Naive thymus-derived CD4-positive, alpha-beta T cell (primary cell): ENCODE measurements at regions of chr3 and their contacts with region 1.

Region 1: DNA sequence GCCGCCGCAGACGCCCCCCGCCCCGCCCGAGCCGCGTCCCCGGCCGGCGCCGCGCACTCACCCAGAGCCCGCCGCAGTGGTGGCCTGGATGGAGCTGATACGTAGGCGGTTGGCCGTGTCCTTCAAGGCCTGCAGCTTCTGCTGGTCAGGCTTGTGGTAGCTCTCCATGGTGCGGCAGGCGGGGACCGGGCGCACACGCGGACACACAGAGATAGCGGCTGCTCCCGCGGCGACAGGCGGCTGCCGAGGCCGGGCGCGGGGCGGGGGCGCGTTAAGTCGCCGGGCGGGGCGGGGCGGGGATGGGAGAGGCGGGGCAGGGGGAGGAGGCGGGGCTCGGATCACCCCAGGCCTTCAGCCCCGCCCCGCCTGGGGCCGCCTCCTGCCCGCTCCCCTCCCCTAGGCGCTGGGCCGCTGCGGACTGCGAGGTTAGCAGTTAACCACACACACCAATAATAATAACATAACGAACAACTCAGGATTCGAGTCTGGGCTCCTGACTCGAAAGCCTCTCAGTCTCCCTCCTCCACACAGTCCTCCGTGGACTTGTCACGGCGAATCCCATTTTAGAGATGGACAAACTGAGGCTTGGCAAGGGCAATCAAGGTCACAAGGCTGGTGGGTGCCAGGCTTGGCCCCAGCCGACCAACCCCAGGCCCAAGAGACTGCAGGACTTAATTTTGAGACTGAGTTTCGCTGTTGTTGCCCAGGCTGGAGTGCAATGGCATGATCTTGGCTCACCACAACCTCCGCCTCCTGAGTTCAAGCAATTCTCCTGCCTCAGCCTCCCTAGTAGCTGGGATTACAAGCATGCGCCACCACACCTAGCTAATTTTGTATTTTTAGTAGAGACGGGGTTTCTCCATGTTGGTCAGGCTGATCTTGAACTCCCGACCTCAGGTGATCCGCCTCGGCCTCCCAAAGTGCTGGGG is at the start of gene TKT:
- DNase-seq: peak; percentile 58 to 85 (median 67)
- ATAC-seq: peak; percentile 92
- H3K4me3 ChIP-seq: peak within 1 kb of the TSS; percentile 70
- H3K4me3 Mint-ChIP-seq: peak within 1 kb of the TSS; percentile 90 to 97 (median 92)
- H3K27ac ChIP-seq: peak within 1 kb of the TSS; percentile 76
- H3K27ac Mint-ChIP-seq: peak within 1 kb of the TSS; percentile 69 to 89 (median 84)
- H3K4me1 ChIP-seq: peaks cover 14% of the 10 kb centered on the region in 2 donors
- H3K4me1 Mint-ChIP-seq: peaks cover 19 to 39% (median 34%) of the 10 kb centered on the region in 7 donors
- H3K27me3 ChIP-seq: no peaks in the 10 kb centered on the region
- H3K27me3 Mint-ChIP-seq: peaks cover 0 to 4% (median 0%) of the 10 kb centered on the region in 5 donors
- total RNA-seq, gene TKT: 83.5 to 333 (median 121) TPM

Region 2: GRCh38 chr3:53160660-53161449 is 95.2 kb before region 1 on chr3 and contains the start of gene PRKCD:
- CTCF ChIA-PET with region 1: no interaction called
- POLR2A ChIA-PET with region 1: no interaction called
- intact Hi-C with region 1: loop called (anchors 1 to 2 kb)
- DNase-seq: peak; percentile 55 to 81 (median 71)
- ATAC-seq: peak; percentile 82
- H3K4me3 ChIP-seq: peak within 1 kb of the TSS; percentile 68
- H3K4me3 Mint-ChIP-seq: peak within 1 kb of the TSS; percentile 80 to 95 (median 92)
- H3K27ac ChIP-seq: peak within 1 kb of the TSS; percentile 77
- H3K27ac Mint-ChIP-seq: peak within 1 kb of the TSS; percentile 75 to 94 (median 90)
- H3K4me1 ChIP-seq: peaks cover 9 to 22% of the 10 kb centered on the region in 2 donors
- H3K4me1 Mint-ChIP-seq: peaks cover 18 to 30% (median 23%) of the 10 kb centered on the region in 7 donors
- H3K27me3 ChIP-seq: no peaks in the 10 kb centered on the region
- H3K27me3 Mint-ChIP-seq: peaks cover 0 to 40% (median 12%) of the 10 kb centered on the region in 5 donors
- total RNA-seq, gene PRKCD: 10.2 to 72.8 (median 18.7) TPM

Region 3: GRCh38 chr3:53219895-53220483 is 36.0 kb before region 1 on chr3:
- CTCF ChIA-PET with region 1: no interaction called
- POLR2A ChIA-PET with region 1: no interaction called
- intact Hi-C with region 1: loop called (anchors 1 to 2 kb)
- DNase-seq: peak; percentile 39 to 83 (median 66)
- ATAC-seq: peak; percentile 91
- H3K4me3 ChIP-seq: no peak overlapping the region
- H3K4me3 Mint-ChIP-seq: no peak overlapping the region
- H3K27ac ChIP-seq: no peak overlapping the region
- H3K27ac Mint-ChIP-seq: peak overlapping the region in 3 of 9 donors; percentile 7 to 19 (median 13)
- H3K4me1 ChIP-seq: no peaks in the 10 kb centered on the region
- H3K4me1 Mint-ChIP-seq: peaks cover 0 to 5% (median 3%) of the 10 kb centered on the region in 7 donors
- H3K27me3 ChIP-seq: no peaks in the 10 kb centered on the region
- H3K27me3 Mint-ChIP-seq: peaks cover 0 to 5% (median 0%) of the 10 kb centered on the region in 5 donors

Region 4: DNA sequence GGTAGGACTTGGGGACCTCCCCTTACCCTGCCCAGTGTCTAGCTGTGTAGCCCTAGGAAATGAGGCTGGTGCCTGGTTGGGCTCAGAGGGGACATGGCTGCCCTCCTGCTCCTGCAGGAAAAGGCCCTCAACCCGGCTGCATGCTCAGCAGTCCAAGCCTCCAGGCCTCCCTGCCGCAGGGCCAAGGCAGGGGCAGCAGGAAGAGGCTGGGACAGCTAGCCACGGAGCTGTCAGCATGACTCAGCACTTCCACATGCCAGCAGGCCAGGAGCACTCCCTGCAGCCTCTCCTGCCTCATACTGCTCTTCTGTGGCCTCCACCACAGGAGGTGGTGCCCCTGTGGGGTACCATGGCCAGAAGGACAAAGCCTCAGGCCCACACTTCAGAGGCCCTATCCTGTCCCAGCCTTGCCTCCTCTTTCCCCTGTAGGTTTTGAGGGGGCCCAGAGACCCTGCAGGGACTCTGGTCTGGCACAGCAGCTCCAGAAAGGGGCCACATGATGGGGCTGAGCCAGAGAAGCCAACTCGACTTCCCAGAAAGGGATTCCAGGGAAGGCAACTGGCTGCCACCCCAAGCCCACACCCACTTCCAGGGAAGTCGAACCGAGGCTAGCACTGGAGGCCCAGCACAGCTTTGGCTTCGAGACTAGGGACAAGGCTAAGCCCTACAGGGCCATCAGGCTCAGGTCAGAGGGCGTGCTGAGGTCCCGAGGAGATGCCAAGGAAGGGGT is 19.8 kb before region 1 on chr3:
- CTCF ChIA-PET with region 1: no interaction called
- POLR2A ChIA-PET with region 1: no interaction called
- intact Hi-C with region 1: no loop called
- DNase-seq: no peak
- ATAC-seq: peak; percentile 63
- H3K4me3 ChIP-seq: no peak overlapping the region
- H3K4me3 Mint-ChIP-seq: no peak overlapping the region
- H3K27ac ChIP-seq: no peak overlapping the region
- H3K27ac Mint-ChIP-seq: peak overlapping the region in 2 of 9 donors; percentile 26 to 42
- H3K4me1 ChIP-seq: no peaks in the 10 kb centered on the region
- H3K4me1 Mint-ChIP-seq: peaks cover 0 to 21% (median 0%) of the 10 kb centered on the region in 7 donors
- H3K27me3 ChIP-seq: no peaks in the 10 kb centered on the region
- H3K27me3 Mint-ChIP-seq: no peaks in the 10 kb centered on the region

Region 5: DNA sequence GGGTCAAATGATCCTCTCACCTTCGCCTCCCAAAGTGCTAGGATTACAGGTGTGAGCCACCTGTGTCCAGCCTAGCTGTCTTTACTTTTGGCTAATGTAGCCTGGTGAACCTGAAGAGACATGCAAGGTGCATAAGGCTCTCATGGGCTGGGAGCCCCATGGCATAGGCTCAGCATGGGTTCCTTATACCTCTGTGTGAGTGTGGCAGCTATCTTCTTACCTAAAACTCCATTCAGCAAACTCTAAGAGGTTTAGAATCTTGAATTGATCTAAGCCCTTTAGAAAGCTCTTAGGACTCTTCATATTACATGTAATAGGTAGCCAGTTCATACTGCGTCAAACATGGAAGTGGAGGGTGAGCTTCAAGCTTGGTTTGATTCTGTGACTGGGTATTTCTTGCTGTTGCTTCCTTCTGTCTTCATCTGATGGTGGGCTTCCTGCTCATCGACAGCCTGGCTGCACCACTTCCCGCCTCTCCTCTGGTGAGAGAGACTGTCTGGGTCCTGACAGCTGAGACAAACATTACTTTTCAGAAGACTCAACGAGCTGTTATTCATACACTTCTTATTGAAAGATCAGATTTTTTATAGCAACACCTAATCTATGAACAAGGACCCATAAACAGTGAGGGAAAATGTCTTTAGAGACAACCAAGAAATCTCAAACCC is 19.0 kb after region 1 on chr3:
- CTCF ChIA-PET with region 1: no interaction called
- POLR2A ChIA-PET with region 1: interaction called, 5 read pairs
- intact Hi-C with region 1: loop called in 1 of 2 experiments (anchors 1 kb)
- DNase-seq: peak in 7 of 9 donors; percentile 18 to 55 (median 46)
- ATAC-seq: peak; percentile 70
- H3K4me3 ChIP-seq: no peak overlapping the region
- H3K4me3 Mint-ChIP-seq: peak overlapping the region in 8 of 10 donors; percentile 1 to 53 (median 47)
- H3K27ac ChIP-seq: no peak overlapping the region
- H3K27ac Mint-ChIP-seq: peak overlapping the region; percentile 8 to 91 (median 83)
- H3K4me1 ChIP-seq: no peaks in the 10 kb centered on the region
- H3K4me1 Mint-ChIP-seq: peaks cover 0 to 22% (median 9%) of the 10 kb centered on the region in 7 donors
- H3K27me3 ChIP-seq: no peaks in the 10 kb centered on the region
- H3K27me3 Mint-ChIP-seq: no peaks in the 10 kb centered on the region

Region 6: GRCh38 chr3:53891497-53892285 is 635.7 kb after region 1 on chr3 and contains the start of gene SELENOK:
- CTCF ChIA-PET with region 1: no interaction called
- POLR2A ChIA-PET with region 1: no interaction called
- intact Hi-C with region 1: loop called (anchors 1 to 2 kb)
- DNase-seq: peak; percentile 84 to 98 (median 97)
- ATAC-seq: peak; percentile 97
- H3K4me3 ChIP-seq: peak within 1 kb of the TSS; percentile 81
- H3K4me3 Mint-ChIP-seq: peak within 1 kb of the TSS; percentile 89 to 98 (median 94)
- H3K27ac ChIP-seq: peak within 1 kb of the TSS; percentile 98
- H3K27ac Mint-ChIP-seq: peak within 1 kb of the TSS; percentile 97 to 99 (median 99)
- H3K4me1 ChIP-seq: peaks cover 12 to 36% of the 10 kb centered on the region in 2 donors
- H3K4me1 Mint-ChIP-seq: peaks cover 30 to 64% (median 60%) of the 10 kb centered on the region in 7 donors
- H3K27me3 ChIP-seq: no peaks in the 10 kb centered on the region
- H3K27me3 Mint-ChIP-seq: peaks cover 1 to 29% (median 17%) of the 10 kb centered on the region in 5 donors
- total RNA-seq, gene SELENOK: 33.6 to 104 (median 45.4) TPM